ENCODE measurements at regions of chr9 and their contacts with region 1.

Region 1: GRCh38 chr9:92716557-92716956 is 46.6 kb upstream of the IPPK start:
- DNase-seq: peak; percentile 20
- H3K4me3 ChIP-seq: no peak overlapping the region
- H3K27ac ChIP-seq: no peak overlapping the region
- H3K27me3 ChIP-seq: no peaks in the 10 kb centered on the region
- CTCF ChIP-seq: peak; percentile 93

Region 2: DNA sequence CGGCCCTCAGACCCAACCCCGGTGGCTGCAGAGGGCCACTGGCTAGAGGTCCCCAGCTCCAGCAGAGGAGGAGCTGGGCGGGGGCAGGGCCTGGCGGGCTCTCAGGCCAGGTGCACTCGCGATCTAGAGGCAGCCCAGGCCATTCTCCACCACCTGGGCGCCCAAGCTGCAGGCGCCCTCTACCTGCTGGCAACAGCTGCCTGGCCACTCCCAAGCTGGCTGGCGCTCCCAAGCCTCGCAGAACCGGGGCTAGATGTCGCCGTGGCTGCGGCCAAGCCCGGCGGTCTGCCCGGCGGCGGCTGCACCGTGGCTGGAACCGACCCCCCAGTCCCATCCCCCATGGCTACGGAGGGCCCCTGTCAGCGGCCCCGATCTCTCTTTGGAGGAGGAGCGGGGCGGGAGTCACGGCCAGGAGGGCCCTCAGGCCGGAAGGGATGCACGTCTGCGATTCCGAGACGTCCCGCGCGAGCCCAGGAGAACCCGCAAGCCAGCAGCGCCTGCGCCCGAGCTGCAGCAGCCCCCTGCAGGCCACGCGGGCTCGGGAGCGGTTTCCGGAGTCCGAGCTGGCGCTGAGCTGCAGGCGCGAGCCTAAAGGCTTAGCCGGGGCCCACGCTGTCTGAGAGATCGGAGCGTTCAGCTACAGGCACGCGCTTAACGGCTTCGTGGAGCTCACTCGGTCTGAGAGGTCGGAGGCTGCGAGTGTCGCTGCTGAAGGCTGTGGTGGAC is 92.3 kb after region 1 on chr9:
- in situ Hi-C with region 1: loop called (anchors 25 kb)
- DNase-seq: peak; percentile 53
- H3K4me3 ChIP-seq: peak overlapping the region; percentile 26
- H3K27ac ChIP-seq: no peak overlapping the region
- H3K27me3 ChIP-seq: peaks cover 62% of the 10 kb centered on the region
- CTCF ChIP-seq: peak; percentile 48

Measured in brain microvascular endothelial cell (primary cell).